GM10248 (cell line): ENCODE measurements at regions of chr21 and their contacts with region 1.

Region 1: GRCh38 chr21:43824333-43825241 is 35.2 kb downstream of the RRP1 start:
- DNase-seq: no peak
- CTCF ChIP-seq: no peak

Region 2: DNA sequence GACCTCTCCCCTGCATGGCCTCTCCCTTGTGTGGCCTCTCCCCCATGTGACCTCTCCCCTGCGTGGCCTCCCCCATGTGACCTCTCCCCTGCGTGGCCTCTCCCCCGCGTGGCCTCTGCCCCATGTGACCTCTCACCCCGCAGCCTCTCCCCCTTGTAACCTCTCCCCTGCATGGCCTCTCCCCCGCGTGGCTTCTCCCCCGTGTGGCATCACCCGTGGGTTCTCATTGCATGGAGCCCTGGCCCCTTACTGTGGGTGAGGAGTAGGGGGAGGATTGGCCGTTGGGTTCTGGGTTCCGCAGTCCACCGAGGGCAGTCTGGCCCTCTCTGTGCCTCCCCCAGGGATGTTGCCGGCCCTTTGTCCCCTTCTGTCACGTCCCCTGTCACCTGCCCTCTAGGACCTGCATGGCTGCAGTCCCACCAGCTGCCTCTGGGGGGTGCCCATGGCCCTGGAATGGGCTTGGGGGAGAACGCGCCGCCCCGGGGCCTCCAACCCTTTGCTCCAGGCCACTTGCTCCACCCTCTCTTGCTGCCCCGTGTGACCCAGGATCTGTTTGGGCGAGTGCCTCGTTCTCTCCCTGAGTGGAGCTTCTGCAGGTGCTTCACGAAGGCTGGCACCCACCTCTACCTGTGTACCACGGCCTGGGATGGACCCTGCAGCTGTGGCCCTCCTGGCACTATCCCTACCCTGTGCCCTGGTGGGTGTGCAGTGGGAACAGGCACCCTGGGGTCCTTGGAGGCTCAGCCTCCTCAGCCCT is 13.9 kb before region 1 on chr21:
- CTCF ChIA-PET with region 1: interaction called, 11 read pairs
- POLR2A ChIA-PET with region 1: no interaction called
- DNase-seq: peak; percentile 95
- CTCF ChIP-seq: peak; percentile 98